Dendritic cell treated with granulocyte-macrophage colony-stimulating factor and Interleukin-4, amounts not matched to agents 40 ng/mL and 50 ng/mL, for 4 days (primary cell): ENCODE measurements at regions of chr7 and their contacts with region 1.

Region 1: GRCh38 chr7:37448636-37449361 is at the start of gene ELMO1:
- H3K4me3 Mint-ChIP-seq: peak within 1 kb of the TSS; percentile 83
- H3K27ac Mint-ChIP-seq: peak within 1 kb of the TSS; percentile 96
- H3K4me1 Mint-ChIP-seq: peaks cover 38% of the 10 kb centered on the region
- H3K27me3 Mint-ChIP-seq: no peaks in the 10 kb centered on the region

Region 2: GRCh38 chr7:37336259-37336658 is 112.5 kb before region 1 on chr7:
- intact Hi-C with region 1: loop called (anchors 5 kb)
- H3K4me3 Mint-ChIP-seq: peak overlapping the region; percentile 39
- H3K27ac Mint-ChIP-seq: peak overlapping the region; percentile 64
- H3K4me1 Mint-ChIP-seq: peaks cover 56% of the 10 kb centered on the region
- H3K27me3 Mint-ChIP-seq: no peaks in the 10 kb centered on the region

Region 3: GRCh38 chr7:37391791-37392672 is 56.8 kb before region 1 on chr7:
- intact Hi-C with region 1: loop called (anchors 5 kb)
- H3K4me3 Mint-ChIP-seq: peak overlapping the region; percentile 57
- H3K27ac Mint-ChIP-seq: peak overlapping the region; percentile 89
- H3K4me1 Mint-ChIP-seq: peaks cover 81% of the 10 kb centered on the region
- H3K27me3 Mint-ChIP-seq: no peaks in the 10 kb centered on the region

Region 4: DNA sequence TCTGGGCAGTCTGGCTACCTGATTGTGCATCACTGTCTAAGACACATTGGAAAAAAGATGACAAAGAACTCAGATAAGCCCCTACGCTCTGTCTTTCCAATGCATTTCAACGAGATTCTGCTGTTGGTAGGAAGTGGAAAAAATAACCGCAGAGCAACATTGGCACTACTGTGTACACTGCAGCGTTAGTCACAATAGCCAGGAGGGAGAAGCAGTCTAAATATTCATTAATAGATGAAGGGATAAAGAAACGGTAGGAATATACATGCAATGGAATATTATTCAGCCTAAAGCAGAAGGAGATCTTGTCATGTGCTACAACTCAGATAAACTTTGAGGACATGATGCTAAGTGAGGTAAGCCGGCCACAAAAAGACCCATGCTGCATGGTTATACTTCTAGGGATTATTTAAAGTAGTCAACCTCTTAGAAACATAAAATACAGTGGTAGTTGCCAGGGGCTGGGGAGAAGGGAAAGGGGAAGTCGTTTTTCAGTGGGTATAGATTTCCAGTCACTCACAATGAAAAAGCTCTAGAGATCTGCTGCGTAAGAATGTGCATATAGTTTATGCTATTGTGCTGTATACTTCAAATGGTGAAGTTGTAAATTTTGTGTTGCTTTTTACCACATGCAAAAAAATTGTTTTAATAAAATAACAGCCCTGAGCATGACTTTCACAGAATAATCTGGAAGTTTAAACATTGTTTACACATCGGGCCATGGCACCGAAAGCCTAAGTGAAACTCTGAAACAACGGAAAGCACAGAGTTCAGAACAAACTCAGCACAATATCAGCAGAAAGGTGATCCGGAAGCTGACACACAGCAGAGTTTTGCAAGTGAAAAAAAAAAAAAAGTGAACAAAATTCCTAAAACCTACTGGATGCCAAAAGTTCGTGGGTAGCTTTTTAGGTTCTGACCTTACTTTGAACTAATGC is 40.2 kb before region 1 on chr7:
- intact Hi-C with region 1: loop called (anchors 5 kb)
- H3K4me3 Mint-ChIP-seq: peak overlapping the region; percentile 62
- H3K27ac Mint-ChIP-seq: peak overlapping the region; percentile 84
- H3K4me1 Mint-ChIP-seq: peaks cover 84% of the 10 kb centered on the region
- H3K27me3 Mint-ChIP-seq: no peaks in the 10 kb centered on the region

Region 5: GRCh38 chr7:37424995-37425394 is 23.8 kb before region 1 on chr7:
- intact Hi-C with region 1: loop called (anchors 1 kb)
- H3K4me3 Mint-ChIP-seq: peak overlapping the region; percentile 17
- H3K27ac Mint-ChIP-seq: peak overlapping the region; percentile 85
- H3K4me1 Mint-ChIP-seq: peaks cover 62% of the 10 kb centered on the region
- H3K27me3 Mint-ChIP-seq: no peaks in the 10 kb centered on the region